Aorta (tissue), 5 donors: ENCODE measurements at regions of chr12 and their contacts with region 1.

Region 1: DNA sequence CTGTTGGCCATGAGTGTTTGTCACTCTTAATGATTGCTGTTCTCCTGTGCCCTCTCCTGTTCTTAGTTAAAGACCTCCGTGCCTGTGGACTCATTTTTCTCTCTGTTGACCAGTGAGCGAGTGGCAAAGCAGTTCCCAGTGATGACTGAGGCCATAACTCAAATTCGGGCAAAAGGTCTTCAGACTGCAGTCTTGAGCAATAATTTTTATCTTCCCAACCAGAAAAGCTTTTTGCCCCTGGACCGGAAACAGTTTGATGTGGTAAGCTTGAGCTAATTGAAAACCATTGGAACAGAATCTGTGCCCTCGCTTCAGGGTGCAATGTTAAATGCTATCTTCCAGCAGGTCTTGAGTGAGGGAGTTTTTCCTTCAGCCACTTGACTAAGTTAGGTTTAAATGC is 19.8 kb downstream of the ACAD10 start:
- DNase-seq: no peak
- ATAC-seq: no peak
- H3K4me3 ChIP-seq: no peak overlapping the region
- H3K27ac ChIP-seq: no peak overlapping the region
- H3K4me1 ChIP-seq: no peaks in the 10 kb centered on the region
- H3K27me3 ChIP-seq: no peaks in the 10 kb centered on the region

Region 2: DNA sequence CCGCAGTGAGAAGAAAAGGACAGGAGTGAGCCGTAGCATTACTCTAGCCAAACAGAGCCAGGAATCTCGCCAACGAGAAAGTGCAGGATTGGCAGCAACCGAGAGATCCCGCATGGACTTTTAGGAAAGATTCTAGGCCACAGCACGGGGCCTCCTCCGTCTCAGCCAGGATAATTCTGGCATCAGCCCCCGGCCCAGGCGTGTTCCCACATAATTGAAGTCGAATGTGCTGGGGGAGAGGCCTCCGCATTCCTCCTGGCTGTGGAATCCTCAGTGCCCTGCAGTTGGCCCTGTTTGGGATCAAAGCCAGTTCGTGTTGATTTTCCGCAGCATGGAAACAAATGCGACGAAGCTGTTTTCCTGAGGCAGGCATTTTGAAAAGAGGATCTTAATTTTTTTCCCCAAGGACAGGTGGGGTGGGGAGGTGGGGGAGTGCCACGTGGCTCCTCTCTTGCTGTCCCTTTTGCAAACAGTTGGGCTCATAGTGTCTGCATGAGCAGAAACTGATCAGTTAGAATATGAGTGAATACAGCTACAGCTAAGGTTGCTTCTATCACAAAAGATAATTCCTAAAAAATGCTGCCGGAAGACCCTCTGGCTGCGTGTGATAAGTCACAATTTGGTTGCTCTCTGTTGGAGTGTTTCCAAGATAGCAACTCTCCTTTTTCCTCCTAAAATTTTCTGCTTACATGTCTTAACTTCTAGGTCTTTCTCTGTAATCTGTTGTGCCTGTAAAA is 69.3 kb before region 1 on chr12:
- intact Hi-C with region 1: loop called in 1 of 2 experiments (anchors 2 kb)
- DNase-seq: peak; percentile 78 to 81
- ATAC-seq: peak; percentile 85
- H3K4me3 ChIP-seq: no peak overlapping the region
- H3K27ac ChIP-seq: no peak overlapping the region
- H3K4me1 ChIP-seq: peaks cover 3 to 4% of the 10 kb centered on the region in 2 donors
- H3K27me3 ChIP-seq: no peaks in the 10 kb centered on the region

Region 3: GRCh38 chr12:111685744-111686517 is 19.7 kb before region 1 on chr12 and contains the starts of genes ACAD10 and BRAP:
- intact Hi-C with region 1: no loop called
- DNase-seq: peak; percentile 96 to 98
- ATAC-seq: peak; percentile 97
- H3K4me3 ChIP-seq: peak within 1 kb of the TSS; percentile 69 to 82
- H3K27ac ChIP-seq: peak within 1 kb of the TSS in 1 of 2 donors; percentile 46
- H3K4me1 ChIP-seq: peaks cover 0 to 3% of the 10 kb centered on the region in 2 donors
- H3K27me3 ChIP-seq: no peaks in the 10 kb centered on the region
- total RNA-seq, gene ACAD10: 16.0 to 27.9 TPM
- total RNA-seq, gene BRAP: 14.0 to 18.0 TPM